B cell (primary cell): ENCODE measurements at regions of chr11 and their contacts with region 1.

Region 1: GRCh38 chr11:34438529-34439507 is at the start of gene CAT:
- DNase-seq: peak; percentile 96
- ATAC-seq: peak; percentile 92
- H3K4me3 ChIP-seq: peak within 1 kb of the TSS; percentile 82 to 98 (median 88)
- H3K4me3 Mint-ChIP-seq: peak within 1 kb of the TSS; percentile 99
- H3K27ac ChIP-seq: peak within 1 kb of the TSS; percentile 75 to 85
- H3K27ac Mint-ChIP-seq: peak within 1 kb of the TSS; percentile 98
- H3K4me1 ChIP-seq: peaks cover 27 to 39% of the 10 kb centered on the region in 2 donors
- H3K4me1 Mint-ChIP-seq: peaks cover 44% of the 10 kb centered on the region
- H3K27me3 ChIP-seq: no peaks in the 10 kb centered on the region
- H3K27me3 Mint-ChIP-seq: no peaks in the 10 kb centered on the region
- CTCF ChIP-seq: no peak
- total RNA-seq, gene CAT: 83.2 and 88.8 TPM in 2 replicates

Region 2: DNA sequence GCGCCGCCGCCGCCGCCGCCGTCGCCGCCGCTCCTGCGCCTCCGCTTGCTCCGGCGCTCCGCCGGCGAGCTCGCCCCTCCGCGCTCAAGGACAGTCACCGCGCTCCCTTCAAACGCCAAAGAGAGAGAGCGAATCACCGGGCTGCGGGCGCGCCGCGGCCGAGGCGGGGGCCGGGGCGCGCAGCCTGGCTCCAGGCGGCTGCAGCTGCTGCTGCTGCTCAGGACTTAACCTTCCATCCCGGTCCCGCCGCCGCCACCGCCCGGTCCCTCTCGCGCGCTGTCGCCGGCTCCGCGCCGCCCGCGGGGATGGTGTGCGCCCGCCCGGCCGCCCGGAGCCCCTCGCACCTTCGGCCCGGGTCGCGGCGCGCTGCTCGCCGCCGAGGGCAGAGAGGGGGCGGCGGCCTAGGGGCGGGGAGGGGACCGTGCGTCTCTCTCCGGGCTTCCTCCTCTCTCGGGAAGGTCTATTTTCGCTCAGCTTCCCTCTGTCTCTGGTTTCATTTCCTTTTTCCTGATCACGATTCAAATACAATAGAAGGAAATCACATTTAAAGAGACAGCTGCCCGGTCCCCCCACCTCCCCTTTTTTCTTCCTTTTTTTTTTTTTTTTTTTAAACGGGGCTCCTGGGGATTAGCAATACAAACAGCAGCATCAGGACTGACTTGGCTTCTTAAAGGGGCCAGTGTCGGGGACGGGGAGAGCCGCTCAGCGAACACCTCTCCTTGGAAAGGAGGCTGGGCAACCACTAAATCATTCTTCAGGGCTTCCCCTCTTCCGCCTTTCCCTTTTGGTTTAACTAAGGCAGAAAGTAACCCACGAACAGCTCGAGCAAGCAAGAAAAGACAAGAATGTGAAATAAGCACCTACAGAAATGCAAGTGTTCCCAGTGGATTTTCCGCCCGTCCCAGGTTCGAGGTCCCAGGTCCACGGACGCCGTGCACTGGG is 569.1 kb before region 1 on chr11:
- CTCF ChIA-PET with region 1: no interaction called
- POLR2A ChIA-PET with region 1: no interaction called
- intact Hi-C with region 1: loop called (anchors 1 kb)
- DNase-seq: peak; percentile 75
- ATAC-seq: peak; percentile 72
- H3K4me3 ChIP-seq: peak overlapping the region; percentile 64 to 86 (median 82)
- H3K4me3 Mint-ChIP-seq: peak overlapping the region; percentile 98
- H3K27ac ChIP-seq: no peak overlapping the region
- H3K27ac Mint-ChIP-seq: peak overlapping the region; percentile 83
- H3K4me1 ChIP-seq: peaks cover 26 to 30% of the 10 kb centered on the region in 2 donors
- H3K4me1 Mint-ChIP-seq: peaks cover 32% of the 10 kb centered on the region
- H3K27me3 ChIP-seq: peaks cover 0 to 7% (median 0%) of the 10 kb centered on the region in 4 experiments
- H3K27me3 Mint-ChIP-seq: peaks cover 3% of the 10 kb centered on the region
- CTCF ChIP-seq: no peak

Region 3: GRCh38 chr11:34234086-34234740 is 204.6 kb before region 1 on chr11:
- CTCF ChIA-PET with region 1: no interaction called
- POLR2A ChIA-PET with region 1: interaction called, 3 read pairs
- intact Hi-C with region 1: loop called (anchors 1 kb)
- DNase-seq: peak; percentile 87
- ATAC-seq: peak; percentile 93
- H3K4me3 ChIP-seq: no peak overlapping the region
- H3K4me3 Mint-ChIP-seq: peak overlapping the region; percentile 69
- H3K27ac ChIP-seq: peak overlapping the region; percentile 50 to 64
- H3K27ac Mint-ChIP-seq: peak overlapping the region; percentile 84
- H3K4me1 ChIP-seq: peaks cover 15 to 23% of the 10 kb centered on the region in 2 donors
- H3K4me1 Mint-ChIP-seq: peaks cover 41% of the 10 kb centered on the region
- H3K27me3 ChIP-seq: no peaks in the 10 kb centered on the region
- H3K27me3 Mint-ChIP-seq: no peaks in the 10 kb centered on the region
- CTCF ChIP-seq: no peak

Region 4: GRCh38 chr11:35214792-35215193 is 776.0 kb after region 1 on chr11:
- CTCF ChIA-PET with region 1: no interaction called
- POLR2A ChIA-PET with region 1: no interaction called
- intact Hi-C with region 1: loop called (anchors 1 kb)
- DNase-seq: no peak
- ATAC-seq: peak; percentile 46
- H3K4me3 ChIP-seq: no peak overlapping the region
- H3K4me3 Mint-ChIP-seq: peak overlapping the region; percentile 40
- H3K27ac ChIP-seq: peak overlapping the region in 1 of 2 donors; percentile 3
- H3K27ac Mint-ChIP-seq: peak overlapping the region; percentile 52
- H3K4me1 ChIP-seq: peaks cover 49 to 59% of the 10 kb centered on the region in 2 donors
- H3K4me1 Mint-ChIP-seq: peaks cover 70% of the 10 kb centered on the region
- H3K27me3 ChIP-seq: no peaks in the 10 kb centered on the region
- H3K27me3 Mint-ChIP-seq: no peaks in the 10 kb centered on the region
- CTCF ChIP-seq: no peak